ENCODE measurements at regions of chr3 and their contacts with region 1.

Region 1: DNA sequence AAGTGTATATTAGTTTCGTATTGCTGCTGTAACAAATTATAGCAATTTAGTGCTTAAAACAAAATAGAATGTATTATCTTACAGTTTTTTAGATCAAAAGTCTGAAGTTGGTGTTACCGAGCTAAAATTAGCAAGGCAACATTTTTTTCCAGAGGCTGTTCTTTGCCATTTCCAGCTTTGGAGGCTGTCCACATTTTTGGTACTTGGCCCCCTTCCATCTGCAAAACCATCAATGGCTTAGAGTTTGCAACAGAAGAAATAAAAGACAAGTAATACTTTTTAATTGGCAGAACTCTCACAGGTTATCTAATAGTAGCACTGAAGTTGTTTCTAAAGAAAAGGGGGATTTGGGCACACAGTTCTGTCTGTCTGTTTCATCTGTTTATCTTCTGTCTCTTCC is 1248.5 kb downstream of the ROBO1 start:
- DNase-seq: peak; percentile 54
- H3K4me3 ChIP-seq: no peak overlapping the region
- CTCF ChIP-seq: no peak

Region 2: GRCh38 chr3:78455712-78456433 is 63.4 kb before region 1 on chr3:
- in situ Hi-C with region 1: no loop called
- DNase-seq: no peak
- H3K4me3 ChIP-seq: no peak overlapping the region
- CTCF ChIP-seq: no peak

Region 3: GRCh38 chr3:78483090-78483489 is 36.2 kb before region 1 on chr3:
- in situ Hi-C with region 1: no loop called
- DNase-seq: no peak
- H3K4me3 ChIP-seq: no peak overlapping the region
- CTCF ChIP-seq: no peak

Region 4: GRCh38 chr3:78604341-78604740 is 85.1 kb after region 1 on chr3:
- in situ Hi-C with region 1: loop called (anchors 5 kb)
- DNase-seq: peak; percentile 41
- H3K4me3 ChIP-seq: no peak overlapping the region
- CTCF ChIP-seq: no peak

Region 5: GRCh38 chr3:79651536-79652065 is 1132.3 kb after region 1 on chr3:
- in situ Hi-C with region 1: no loop called
- DNase-seq: peak; percentile 27
- H3K4me3 ChIP-seq: no peak overlapping the region
- CTCF ChIP-seq: no peak